ENCODE measurements at regions of chr7 and their contacts with region 1.

Region 1: GRCh38 chr7:15555381-15555859 is 6.4 kb downstream of the AGMO start:
- DNase-seq: no peak
- H3K4me3 ChIP-seq: no peak overlapping the region
- H3K27ac ChIP-seq: no peak overlapping the region
- H3K4me1 ChIP-seq: peaks cover 0 to 7% of the 10 kb centered on the region in 2 donors
- H3K27me3 ChIP-seq: no peaks in the 10 kb centered on the region
- CTCF ChIP-seq: no peak

Region 2: DNA sequence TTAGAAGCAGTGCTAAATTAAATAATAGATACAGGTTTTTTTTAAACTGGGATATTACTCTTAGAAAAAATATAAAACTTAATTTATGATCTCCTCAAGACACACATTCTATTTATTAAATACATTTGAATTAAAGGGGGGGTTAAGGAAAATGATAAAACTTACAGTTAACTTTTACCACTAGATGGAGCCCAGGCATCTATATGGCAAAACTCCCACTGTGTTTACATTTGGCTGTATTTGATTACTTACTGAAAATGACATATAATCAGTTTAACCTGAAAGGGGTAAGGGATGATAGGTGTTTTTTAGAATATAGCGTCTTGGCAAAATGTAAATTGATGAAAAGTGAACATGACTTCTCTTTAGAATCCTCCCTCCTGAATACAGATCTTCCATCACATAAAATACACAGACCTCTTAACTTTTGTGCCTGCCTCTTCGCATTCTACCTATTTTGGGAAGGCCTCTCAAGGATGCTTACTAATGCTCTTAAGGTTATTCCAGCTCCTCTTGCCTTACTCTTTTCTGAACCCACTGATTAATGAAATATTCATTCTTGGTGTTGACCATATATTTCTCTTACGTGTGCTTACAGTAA is 229.3 kb before region 1 on chr7:
- intact Hi-C with region 1: no loop called
- DNase-seq: no peak
- H3K4me3 ChIP-seq: no peak overlapping the region
- H3K27ac ChIP-seq: no peak overlapping the region
- H3K4me1 ChIP-seq: no peaks in the 10 kb centered on the region
- H3K27me3 ChIP-seq: no peaks in the 10 kb centered on the region
- CTCF ChIP-seq: peak in 2 of 3 experiments; percentile 21 to 38

Region 3: DNA sequence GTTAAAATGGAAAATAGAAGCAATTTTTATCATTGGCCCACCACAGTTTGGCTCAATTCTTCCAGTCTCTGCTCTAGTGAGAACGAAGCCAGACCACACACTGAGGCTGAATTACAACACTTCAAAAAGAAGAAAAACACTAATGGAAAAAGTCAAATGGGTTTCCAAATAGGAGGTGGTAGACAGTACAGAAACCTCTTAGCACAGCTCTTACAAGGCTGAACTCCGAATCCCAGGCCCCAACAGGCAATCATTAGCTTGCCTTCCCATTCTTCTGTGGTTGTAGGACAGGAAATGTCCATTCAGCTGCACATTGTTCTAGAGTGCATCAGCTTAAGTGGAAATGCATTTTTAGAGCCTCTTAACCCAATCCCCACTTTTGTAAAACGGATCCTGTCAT is 246.1 kb after region 1 on chr7:
- intact Hi-C with region 1: no loop called
- DNase-seq: no peak
- H3K4me3 ChIP-seq: no peak overlapping the region
- H3K27ac ChIP-seq: peak overlapping the region; percentile 12 to 69
- H3K4me1 ChIP-seq: peaks cover 0 to 3% of the 10 kb centered on the region in 2 donors
- H3K27me3 ChIP-seq: no peaks in the 10 kb centered on the region
- CTCF ChIP-seq: no peak

Region 4: DNA sequence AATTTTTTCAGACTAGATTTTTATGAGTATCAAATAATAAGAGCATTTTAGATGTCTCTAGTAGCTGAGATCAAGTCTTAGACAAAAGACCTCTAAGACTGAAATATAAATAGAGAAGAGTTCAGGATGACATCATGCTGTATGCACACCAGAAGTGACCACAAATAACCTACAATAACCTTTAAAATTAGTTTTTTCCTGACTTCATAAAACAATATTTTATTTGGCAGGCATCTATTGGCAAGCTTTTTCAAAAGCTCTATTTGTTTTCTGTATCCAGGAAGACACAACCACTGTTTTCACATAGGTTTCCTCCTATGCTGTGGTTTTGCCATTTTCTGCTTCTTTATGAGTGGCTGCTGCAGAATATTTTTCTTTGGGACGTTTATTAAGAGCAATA is 506.8 kb after region 1 on chr7:
- intact Hi-C with region 1: loop called (anchors 10 kb)
- DNase-seq: no peak
- H3K4me3 ChIP-seq: no peak overlapping the region
- H3K27ac ChIP-seq: no peak overlapping the region
- H3K4me1 ChIP-seq: peaks cover 5 to 9% of the 10 kb centered on the region in 2 donors
- H3K27me3 ChIP-seq: no peaks in the 10 kb centered on the region
- CTCF ChIP-seq: no peak

Measured in ascending aorta (tissue), 2 donors.